PC-3 (cell line): ENCODE measurements at regions of chr1 and their contacts with region 1.

Region 1: DNA sequence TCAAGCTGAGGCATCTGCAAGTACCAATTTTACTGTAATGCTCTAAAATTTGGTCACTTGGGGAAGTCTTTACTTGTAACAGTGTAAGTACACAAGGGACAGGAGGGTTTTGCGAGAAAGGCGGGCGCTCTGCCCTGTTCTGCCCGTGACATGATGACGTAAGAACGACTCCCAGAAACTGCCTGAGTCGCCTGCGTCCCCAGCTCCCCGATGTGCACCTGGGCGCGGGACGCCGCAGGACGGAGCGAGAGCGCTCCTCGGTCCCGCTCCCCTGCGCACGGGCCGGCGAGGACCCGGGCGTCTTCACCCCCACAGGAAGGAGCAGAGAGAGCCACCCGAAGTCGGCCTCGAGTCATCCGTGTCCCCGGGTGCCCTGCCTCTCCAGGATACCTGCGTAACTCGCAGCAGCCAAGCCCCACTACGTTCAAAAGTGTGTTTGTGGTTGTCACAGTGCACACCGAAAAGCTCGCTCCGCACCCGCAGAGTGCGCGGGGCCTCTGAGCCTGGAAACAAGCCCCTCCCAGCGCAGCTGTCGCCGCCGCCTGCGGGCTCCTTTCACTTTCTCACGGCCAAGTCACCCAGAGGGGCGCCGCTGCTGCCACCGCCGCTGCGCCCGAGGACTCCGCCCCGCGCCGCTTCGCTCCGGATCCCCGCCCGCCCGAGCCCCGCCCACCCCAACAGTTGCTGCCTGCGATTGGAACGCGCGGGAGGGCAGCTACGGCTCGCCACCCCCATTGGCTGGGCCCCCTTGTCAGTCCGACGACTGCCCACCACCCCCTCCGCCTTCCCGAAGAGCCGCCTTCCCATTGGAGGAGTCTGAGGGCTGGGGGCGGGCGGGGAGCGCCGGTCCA is 3.2 kb upstream of the ZBTB18 start:
- DNase-seq: peak; percentile 99
- ATAC-seq: peak; percentile 90
- H3K4me3 ChIP-seq: peak overlapping the region; percentile 98
- H3K27ac ChIP-seq: peak overlapping the region; percentile 62
- H3K4me1 ChIP-seq: peaks cover 24% of the 10 kb centered on the region
- H3K27me3 ChIP-seq: 0 out of 2 replicates have a peak, but pooled peaks cover 6% of the 10 kb centered on the region
- CTCF ChIP-seq: no peak

Region 2: GRCh38 chr1:243850452-243851256 is 197.2 kb before region 1 on chr1:
- CTCF ChIA-PET with region 1: no interaction called
- POLR2A ChIA-PET with region 1: interaction called, 5 read pairs
- intact Hi-C with region 1: loop called (anchors 1 kb)
- DNase-seq: peak; percentile 84
- ATAC-seq: peak; percentile 59
- H3K4me3 ChIP-seq: peak overlapping the region; percentile 70
- H3K27ac ChIP-seq: peak overlapping the region; percentile 88
- H3K4me1 ChIP-seq: peaks cover 29% of the 10 kb centered on the region
- H3K27me3 ChIP-seq: no peaks in the 10 kb centered on the region
- CTCF ChIP-seq: no peak

Region 3: GRCh38 chr1:243930822-243931671 is 116.8 kb before region 1 on chr1:
- CTCF ChIA-PET with region 1: no interaction called
- POLR2A ChIA-PET with region 1: no interaction called
- intact Hi-C with region 1: no loop called
- DNase-seq: no peak
- ATAC-seq: no peak
- H3K4me3 ChIP-seq: no peak overlapping the region
- H3K27ac ChIP-seq: no peak overlapping the region
- H3K4me1 ChIP-seq: peaks cover 19% of the 10 kb centered on the region
- H3K27me3 ChIP-seq: no peaks in the 10 kb centered on the region
- CTCF ChIP-seq: no peak

Region 4: DNA sequence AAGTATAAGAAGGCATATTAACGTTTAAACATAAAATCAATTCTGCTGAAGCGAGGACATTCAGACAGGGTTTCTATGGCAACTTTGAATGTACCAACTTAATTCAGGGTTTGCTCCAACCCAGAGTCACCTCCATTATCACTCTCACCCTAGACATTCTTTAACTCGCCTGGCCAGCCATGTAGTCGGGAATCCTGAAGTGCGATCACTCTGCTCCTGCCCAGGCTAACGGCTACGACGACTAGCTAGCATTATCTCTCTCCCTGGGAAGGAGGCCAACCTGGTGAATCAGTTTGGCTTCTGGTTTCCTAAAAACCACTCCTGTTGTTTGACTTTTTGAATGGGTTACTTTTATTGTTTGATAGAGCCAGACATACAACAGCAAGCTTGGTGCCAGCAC is 35.6 kb before region 1 on chr1:
- CTCF ChIA-PET with region 1: no interaction called
- POLR2A ChIA-PET with region 1: no interaction called
- intact Hi-C with region 1: loop called (anchors 1 kb)
- DNase-seq: peak; percentile 97
- ATAC-seq: peak; percentile 89
- H3K4me3 ChIP-seq: peak overlapping the region; percentile 50
- H3K27ac ChIP-seq: no peak overlapping the region
- H3K4me1 ChIP-seq: peaks cover 7% of the 10 kb centered on the region
- H3K27me3 ChIP-seq: no peaks in the 10 kb centered on the region
- CTCF ChIP-seq: no peak

Region 5: GRCh38 chr1:244163861-244164562 is 116.2 kb after region 1 on chr1:
- CTCF ChIA-PET with region 1: no interaction called
- POLR2A ChIA-PET with region 1: no interaction called
- intact Hi-C with region 1: loop called (anchors 2 kb)
- DNase-seq: peak; percentile 99
- ATAC-seq: peak; percentile 92
- H3K4me3 ChIP-seq: peak overlapping the region; percentile 45
- H3K27ac ChIP-seq: peak overlapping the region; percentile 78
- H3K4me1 ChIP-seq: peaks cover 38% of the 10 kb centered on the region
- H3K27me3 ChIP-seq: no peaks in the 10 kb centered on the region
- CTCF ChIP-seq: no peak

Region 6: DNA sequence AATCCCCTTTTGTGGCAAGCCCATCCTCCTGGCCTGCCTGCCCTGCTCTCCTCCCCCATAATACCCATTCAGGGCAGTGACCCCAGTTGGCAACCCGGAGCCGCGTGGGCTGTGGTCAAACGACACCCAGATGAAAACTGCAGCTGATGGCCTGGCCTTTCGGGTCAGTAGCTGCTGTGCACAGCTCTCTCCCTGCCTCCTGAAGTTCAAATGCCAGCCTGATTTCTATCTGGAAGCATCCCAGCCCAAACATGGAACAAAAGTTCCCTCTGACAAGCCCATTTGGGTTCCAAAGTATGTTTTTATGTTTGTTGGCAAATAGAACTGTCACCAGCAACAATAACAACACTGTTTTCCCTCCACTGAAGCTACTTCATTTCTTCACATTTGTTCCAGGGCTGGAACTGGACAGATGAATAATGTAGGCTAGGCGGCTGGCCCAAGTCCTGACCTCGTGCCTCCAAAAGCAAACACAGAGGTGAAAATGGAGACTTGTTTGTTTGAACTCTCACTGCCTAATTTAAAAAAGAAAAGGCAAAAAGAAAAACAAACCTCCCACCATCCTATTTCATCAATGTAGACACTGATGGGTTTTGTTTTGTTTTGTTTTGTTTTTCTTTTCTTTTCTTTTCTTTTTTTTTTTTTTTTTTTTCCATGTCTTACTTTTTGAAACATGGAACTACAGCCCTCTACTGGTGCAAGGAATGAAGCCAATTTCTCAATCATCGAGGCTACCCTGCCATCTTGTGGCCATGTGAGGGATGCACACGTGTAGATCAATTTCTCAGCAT is 224.8 kb after region 1 on chr1:
- CTCF ChIA-PET with region 1: no interaction called
- POLR2A ChIA-PET with region 1: no interaction called
- intact Hi-C with region 1: loop called (anchors 1 kb)
- DNase-seq: peak; percentile 94
- ATAC-seq: peak; percentile 32
- H3K4me3 ChIP-seq: peak overlapping the region; percentile 60; the same call in 1 of the 2 replicates
- H3K27ac ChIP-seq: no peak overlapping the region
- H3K4me1 ChIP-seq: peaks cover 33% of the 10 kb centered on the region
- H3K27me3 ChIP-seq: no peaks in the 10 kb centered on the region
- CTCF ChIP-seq: peak; percentile 100